CD4-positive, alpha-beta memory T cell (primary cell): ENCODE measurements at regions of chr6 and their contacts with region 1.

Region 1: DNA sequence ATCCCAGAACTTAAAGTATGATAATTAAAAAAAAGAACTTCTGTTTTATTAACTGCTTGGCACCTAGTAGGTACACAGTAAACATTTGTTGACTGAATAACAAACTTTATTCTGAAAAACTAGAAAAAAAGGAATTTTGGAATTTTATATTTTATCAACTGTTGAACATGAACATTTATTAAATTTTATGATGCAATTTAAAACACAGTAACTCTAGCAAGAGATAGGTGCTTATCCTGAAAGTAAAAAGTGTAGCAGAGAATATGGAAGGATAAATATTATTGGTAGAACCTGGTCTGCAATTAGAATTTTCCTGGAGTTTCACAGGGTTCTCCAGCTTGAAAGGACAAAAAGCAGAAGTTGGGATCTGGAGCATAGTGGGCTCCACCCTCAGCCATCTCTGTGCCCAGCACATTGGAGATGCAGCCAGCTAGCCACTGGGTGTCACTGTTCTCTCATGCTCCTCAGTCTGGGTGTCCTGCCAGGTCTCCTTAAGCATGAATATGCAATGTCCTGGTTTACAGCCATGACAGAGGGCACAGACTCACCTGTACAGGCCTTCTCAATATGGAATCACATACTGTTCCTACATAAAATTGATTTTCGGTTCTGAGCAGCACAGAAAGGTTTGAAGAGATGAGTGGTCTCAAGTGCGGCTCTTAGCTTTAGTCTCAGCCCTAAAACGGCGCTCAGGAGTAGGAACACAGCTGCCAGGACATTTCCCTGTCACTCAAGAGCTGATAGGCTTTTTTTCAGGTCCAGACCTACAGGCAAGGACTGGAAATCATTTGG is 31.7 kb upstream of the IL20RA start:
- DNase-seq: peak; percentile 38 to 53 (median 47)
- H3K4me3 ChIP-seq: no peak overlapping the region
- H3K4me3 Mint-ChIP-seq: no peak overlapping the region
- H3K27ac ChIP-seq: no peak overlapping the region
- H3K27ac Mint-ChIP-seq: no peak overlapping the region
- H3K4me1 ChIP-seq: no peaks in the 10 kb centered on the region
- H3K4me1 Mint-ChIP-seq: no peaks in the 10 kb centered on the region
- H3K27me3 ChIP-seq: no peaks in the 10 kb centered on the region
- H3K27me3 Mint-ChIP-seq: peaks cover 10 to 18% of the 10 kb centered on the region in 2 donors

Region 2: GRCh38 chr6:137089305-137089704 is 12.8 kb after region 1 on chr6:
- CTCF ChIA-PET with region 1: interaction called, 12 read pairs
- POLR2A ChIA-PET with region 1: no interaction called
- intact Hi-C with region 1: no loop called
- DNase-seq: no peak
- H3K4me3 ChIP-seq: no peak overlapping the region
- H3K4me3 Mint-ChIP-seq: no peak overlapping the region
- H3K27ac ChIP-seq: no peak overlapping the region
- H3K27ac Mint-ChIP-seq: no peak overlapping the region
- H3K4me1 ChIP-seq: peaks cover 2% of the 10 kb centered on the region
- H3K4me1 Mint-ChIP-seq: peaks cover 0 to 2% (median under 1%) of the 10 kb centered on the region in 4 donors
- H3K27me3 ChIP-seq: no peaks in the 10 kb centered on the region
- H3K27me3 Mint-ChIP-seq: peaks cover 4 to 6% of the 10 kb centered on the region in 2 donors